AG04449 (cell line): ENCODE measurements at regions of chr11 and their contacts with region 1.

Region 1: DNA sequence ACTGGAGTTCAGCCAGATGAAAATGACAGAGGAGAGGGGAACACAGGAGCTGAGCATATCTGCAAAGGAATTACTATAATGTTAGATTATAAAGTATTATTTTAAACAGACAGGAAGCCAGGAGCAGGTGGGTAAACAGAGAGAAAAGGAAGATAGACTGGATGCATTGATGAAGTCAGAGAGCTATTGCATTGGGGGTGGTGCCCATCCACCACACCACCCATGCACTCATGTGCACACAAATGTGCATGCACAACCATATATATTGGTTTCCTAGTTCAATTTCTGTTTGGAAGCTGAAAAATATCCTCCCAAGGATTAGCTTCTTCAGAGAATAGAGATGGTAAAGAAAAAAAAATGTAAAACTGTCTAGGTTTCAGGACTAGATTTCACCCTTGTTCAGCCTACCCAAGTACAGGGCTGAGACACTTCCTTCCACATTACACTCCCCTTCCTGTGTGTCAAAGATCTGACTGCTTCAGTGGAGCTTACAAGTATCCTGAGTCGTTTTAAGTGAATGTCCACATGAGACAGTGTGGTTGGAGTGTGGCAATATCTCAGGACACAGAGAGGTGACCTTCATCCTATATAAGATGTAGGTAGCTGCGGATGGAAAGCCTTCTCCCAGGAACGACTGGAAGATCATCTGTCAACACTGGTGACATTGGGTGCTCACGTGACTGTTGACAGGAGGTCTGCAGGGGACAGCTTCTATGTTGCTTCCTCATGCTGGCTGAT is 12.2 kb upstream of the SMPD1 start:
- DNase-seq: no peak
- H3K4me3 ChIP-seq: no peak overlapping the region
- CTCF ChIP-seq: no peak

Region 2: DNA sequence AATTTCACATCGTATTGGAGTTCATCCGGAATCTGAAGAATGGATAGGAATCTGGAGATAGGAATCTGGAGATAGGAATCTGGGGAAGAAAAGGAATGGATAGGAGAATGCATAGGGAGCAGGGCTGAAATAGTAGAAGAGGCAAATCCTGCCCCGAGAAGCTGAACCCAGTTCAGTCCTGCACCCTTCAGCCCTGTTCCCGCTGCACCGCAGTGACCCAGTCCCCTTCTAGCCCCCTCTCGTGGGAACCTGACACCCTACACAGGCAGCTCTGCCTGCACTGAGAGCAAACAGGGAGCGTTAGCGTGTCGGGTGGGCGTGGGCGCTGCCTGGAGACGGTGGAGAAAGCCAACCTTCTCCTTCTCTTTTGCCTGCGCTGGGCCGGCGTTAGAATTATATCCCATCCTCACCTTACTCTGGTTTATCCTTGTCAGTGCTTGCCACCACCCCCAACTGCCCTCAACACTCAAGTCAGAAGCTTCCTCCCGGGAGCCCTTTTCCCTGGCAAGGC is 119.4 kb before region 1 on chr11:
- CTCF ChIA-PET with region 1: no interaction called
- POLR2A ChIA-PET with region 1: no interaction called
- DNase-seq: no peak
- H3K4me3 ChIP-seq: no peak overlapping the region; the same call in 1 of the 2 replicates
- CTCF ChIP-seq: no peak

Region 3: DNA sequence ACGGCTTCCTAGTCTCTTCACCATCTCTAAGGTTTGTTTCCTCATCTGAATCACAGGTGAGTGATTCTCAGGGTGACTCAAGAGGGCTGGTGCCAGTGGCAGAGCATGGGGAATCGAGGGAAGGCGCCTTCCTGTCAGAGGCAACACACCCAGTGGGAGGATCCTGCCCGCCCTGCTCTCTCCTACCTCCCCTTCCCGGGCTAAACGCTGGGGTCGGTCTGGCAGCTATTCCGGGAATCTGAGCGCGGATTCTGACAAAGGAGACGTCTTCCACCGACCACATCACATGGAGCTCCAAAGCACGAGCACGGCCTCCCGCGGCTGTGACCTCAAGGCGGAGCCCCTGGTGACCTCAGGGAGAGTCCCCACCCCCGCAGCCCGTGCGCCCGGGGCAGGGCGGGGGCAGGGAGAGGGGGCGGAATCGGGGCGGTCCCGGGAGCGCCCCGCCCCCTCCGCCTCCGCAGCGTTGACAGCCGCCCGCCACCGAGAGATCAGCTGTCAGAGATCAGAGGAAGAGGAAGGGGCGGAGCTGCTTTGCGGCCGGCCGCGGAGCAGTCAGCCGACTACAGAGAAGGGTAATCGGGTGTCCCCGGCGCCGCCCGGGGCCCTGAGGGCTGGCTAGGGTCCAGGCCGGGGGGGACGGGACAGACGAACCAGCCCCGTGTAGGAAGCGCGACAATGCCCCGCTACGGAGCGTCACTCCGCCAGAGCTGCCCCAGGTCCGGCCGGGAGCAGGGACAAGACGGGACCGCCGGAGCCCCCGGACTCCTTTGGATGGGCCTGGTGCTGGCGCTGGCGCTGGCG is 12.1 kb after region 1 on chr11 and contains the start of gene SMPD1:
- CTCF ChIA-PET with region 1: interaction called, 105 read pairs
- POLR2A ChIA-PET with region 1: no interaction called
- DNase-seq: peak; percentile 14
- H3K4me3 ChIP-seq: peak within 1 kb of the TSS; percentile 81
- CTCF ChIP-seq: no peak

Region 4: DNA sequence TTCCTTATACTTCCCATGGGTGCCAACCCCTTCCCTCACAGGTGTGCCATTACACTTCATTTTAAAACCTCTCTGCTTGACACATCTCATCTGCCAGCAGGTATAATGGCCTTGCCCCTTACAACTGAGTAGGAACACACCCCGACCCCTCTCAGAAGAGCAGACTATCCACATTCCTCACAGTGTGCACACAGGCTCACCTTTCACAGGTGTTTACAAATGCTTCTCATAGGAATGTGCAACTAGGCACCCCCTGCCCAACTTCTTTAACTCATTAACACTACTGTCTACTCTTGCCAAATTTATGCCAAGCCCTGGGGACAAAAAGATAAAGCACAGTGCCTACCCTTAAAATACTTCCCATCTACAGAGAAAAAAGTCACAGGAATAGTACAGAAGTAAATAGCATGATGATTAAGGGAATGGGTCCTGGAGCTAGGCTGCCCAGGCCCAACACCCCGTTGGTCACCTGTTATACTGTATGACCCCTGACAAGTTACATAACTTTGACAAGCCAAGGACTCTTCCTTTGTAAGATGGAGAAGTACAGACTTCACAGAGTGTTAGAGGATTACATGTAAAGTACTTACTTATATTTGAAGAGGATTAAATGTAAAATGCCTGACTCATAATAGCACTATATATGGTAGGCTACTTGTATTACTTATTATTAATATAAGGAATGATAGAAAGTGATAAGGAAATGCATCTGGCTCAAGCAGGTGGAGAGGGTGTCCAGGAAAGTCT is 80.5 kb after region 1 on chr11:
- CTCF ChIA-PET with region 1: interaction called, 701 read pairs
- POLR2A ChIA-PET with region 1: no interaction called
- DNase-seq: no peak
- H3K4me3 ChIP-seq: no peak overlapping the region
- CTCF ChIP-seq: no peak

Region 5: GRCh38 chr11:6489306-6489705 is 111.2 kb after region 1 on chr11:
- CTCF ChIA-PET with region 1: interaction called, 22 read pairs
- POLR2A ChIA-PET with region 1: no interaction called
- DNase-seq: no peak
- H3K4me3 ChIP-seq: no peak overlapping the region
- CTCF ChIP-seq: no peak

Region 6: GRCh38 chr11:6523253-6523652 is 145.2 kb after region 1 on chr11:
- CTCF ChIA-PET with region 1: interaction called, 11 read pairs
- POLR2A ChIA-PET with region 1: no interaction called
- DNase-seq: no peak
- H3K4me3 ChIP-seq: no peak overlapping the region
- CTCF ChIP-seq: no peak

Region 7: DNA sequence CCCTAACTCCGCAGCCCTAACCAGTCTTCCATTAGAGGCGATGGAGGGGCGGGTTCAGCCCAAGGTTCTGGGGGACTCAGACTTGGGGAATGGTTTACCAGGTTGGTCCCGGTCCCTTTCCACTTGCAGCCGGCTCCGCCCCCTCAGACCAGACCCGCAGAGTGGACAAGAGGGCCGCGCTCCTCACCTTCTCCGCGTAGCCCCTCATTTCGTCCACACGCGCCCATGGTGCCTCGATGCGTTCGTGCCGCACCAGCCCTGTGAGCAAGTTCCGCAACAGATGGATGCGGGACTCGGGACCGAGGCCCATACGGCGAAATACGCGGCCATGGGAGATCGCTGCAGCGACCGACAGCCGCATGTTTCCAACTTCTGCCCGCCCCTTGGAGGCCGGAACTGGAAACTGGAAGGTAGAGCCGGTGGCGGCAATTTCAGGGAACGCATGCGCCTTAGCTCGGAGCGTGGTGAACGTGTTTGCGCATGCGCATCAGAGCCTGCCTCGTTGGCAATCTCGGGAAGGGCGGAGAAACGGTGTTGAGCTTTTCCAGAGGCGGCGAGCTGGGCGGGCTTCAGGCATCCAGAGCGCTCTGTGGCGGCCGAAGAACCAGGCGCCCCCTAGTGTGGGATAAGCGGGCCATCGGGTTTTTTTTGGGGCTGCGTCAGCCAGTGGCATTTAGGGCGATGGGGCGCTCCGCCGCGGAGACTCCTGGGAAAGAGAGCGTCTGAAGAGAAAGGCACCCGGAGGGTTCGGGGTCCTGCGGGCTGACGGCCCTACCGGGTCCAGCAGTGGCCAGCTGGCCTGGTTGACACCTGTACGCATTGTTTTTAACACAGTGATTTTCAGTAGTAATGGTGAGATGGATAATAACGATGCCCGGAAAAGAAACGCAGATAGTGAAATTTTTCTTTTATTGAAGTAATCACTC is 305.1 kb after region 1 on chr11 and contains the start of gene MRPL17:
- CTCF ChIA-PET with region 1: interaction called, 20 read pairs
- POLR2A ChIA-PET with region 1: no interaction called
- DNase-seq: peak; percentile 86
- H3K4me3 ChIP-seq: peak within 1 kb of the TSS; percentile 100
- CTCF ChIP-seq: peak; percentile 88